WTC11 (cell line): ENCODE measurements at regions of chr6 and their contacts with region 1.

Region 1: GRCh38 chr6:24991810-24992467 is 56.2 kb upstream of the RIPOR2 start:
- DNase-seq: peak; percentile 61
- ATAC-seq: peak; percentile 88
- H3K4me3 Mint-ChIP-seq: no peak overlapping the region
- H3K27ac Mint-ChIP-seq: no peak overlapping the region
- H3K4me1 Mint-ChIP-seq: peaks cover 14% of the 10 kb centered on the region
- H3K27me3 Mint-ChIP-seq: peaks cover 2% of the 10 kb centered on the region; the same call in 1 of the 2 replicates
- CTCF ChIP-seq: peak; percentile 83

Region 2: DNA sequence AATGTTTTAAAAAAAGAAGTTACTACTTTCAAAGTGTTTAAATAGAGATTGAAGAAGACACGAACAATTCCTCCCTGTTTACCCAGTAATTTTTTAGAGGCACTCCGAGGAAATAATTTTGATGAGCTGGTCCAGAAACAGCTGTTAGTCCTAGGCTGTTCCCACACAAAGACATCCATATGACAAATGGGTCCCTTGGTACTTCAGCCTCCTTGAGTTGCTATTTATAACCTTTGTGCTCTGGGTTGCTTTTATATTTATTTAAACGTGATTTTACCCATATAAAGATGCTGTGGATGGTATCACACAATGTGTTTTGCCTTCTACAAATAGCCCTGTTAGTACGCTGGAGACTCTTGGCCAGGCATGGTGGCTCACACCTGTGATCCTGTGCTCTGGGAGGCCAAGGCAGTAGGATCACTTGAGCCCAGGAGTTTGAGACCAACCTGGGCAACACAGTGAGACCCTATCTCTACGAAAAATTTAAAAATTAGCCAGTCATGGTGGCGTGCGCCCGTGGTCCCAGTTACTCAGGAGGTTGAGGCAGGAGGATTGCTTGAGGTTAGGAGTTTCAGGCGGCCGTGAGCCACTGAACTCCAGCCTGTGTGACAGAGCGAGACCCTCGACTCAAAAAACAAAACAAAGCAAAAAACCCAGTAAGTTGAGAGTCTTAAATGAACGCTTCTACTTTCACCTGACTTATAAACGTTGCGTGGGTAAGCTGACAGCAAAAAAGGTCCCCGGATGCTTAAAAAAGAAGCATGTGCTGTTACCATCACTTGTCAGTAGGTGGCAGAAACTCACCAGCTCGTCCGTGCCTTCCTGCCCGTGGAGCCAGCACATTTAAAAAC is 136.3 kb before region 1 on chr6:
- CTCF ChIA-PET with region 1: interaction called, 53 read pairs
- POLR2A ChIA-PET with region 1: no interaction called
- DNase-seq: peak; percentile 44
- ATAC-seq: peak; percentile 89
- H3K4me3 Mint-ChIP-seq: no peak overlapping the region
- H3K27ac Mint-ChIP-seq: no peak overlapping the region
- H3K4me1 Mint-ChIP-seq: peaks cover 35% of the 10 kb centered on the region
- H3K27me3 Mint-ChIP-seq: no peaks in the 10 kb centered on the region
- CTCF ChIP-seq: peak; percentile 66; the same call in 1 of the 2 replicates

Region 3: GRCh38 chr6:24876499-24877465 is 115.2 kb before region 1 on chr6:
- CTCF ChIA-PET with region 1: interaction called, 23 read pairs
- POLR2A ChIA-PET with region 1: interaction called, 3 read pairs
- DNase-seq: peak; percentile 59
- ATAC-seq: peak; percentile 95
- H3K4me3 Mint-ChIP-seq: peak overlapping the region; percentile 44
- H3K27ac Mint-ChIP-seq: peak overlapping the region; percentile 74
- H3K4me1 Mint-ChIP-seq: peaks cover 72% of the 10 kb centered on the region
- H3K27me3 Mint-ChIP-seq: no peaks in the 10 kb centered on the region
- CTCF ChIP-seq: no peak

Region 4: GRCh38 chr6:24910961-24911712 is 80.8 kb before region 1 on chr6:
- CTCF ChIA-PET with region 1: interaction called, 51 read pairs
- POLR2A ChIA-PET with region 1: no interaction called
- DNase-seq: peak; percentile 69
- ATAC-seq: peak; percentile 50
- H3K4me3 Mint-ChIP-seq: peak overlapping the region; percentile 78
- H3K27ac Mint-ChIP-seq: no peak overlapping the region
- H3K4me1 Mint-ChIP-seq: peaks cover 34% of the 10 kb centered on the region
- H3K27me3 Mint-ChIP-seq: peaks cover 51% of the 10 kb centered on the region
- CTCF ChIP-seq: no peak

Region 5: DNA sequence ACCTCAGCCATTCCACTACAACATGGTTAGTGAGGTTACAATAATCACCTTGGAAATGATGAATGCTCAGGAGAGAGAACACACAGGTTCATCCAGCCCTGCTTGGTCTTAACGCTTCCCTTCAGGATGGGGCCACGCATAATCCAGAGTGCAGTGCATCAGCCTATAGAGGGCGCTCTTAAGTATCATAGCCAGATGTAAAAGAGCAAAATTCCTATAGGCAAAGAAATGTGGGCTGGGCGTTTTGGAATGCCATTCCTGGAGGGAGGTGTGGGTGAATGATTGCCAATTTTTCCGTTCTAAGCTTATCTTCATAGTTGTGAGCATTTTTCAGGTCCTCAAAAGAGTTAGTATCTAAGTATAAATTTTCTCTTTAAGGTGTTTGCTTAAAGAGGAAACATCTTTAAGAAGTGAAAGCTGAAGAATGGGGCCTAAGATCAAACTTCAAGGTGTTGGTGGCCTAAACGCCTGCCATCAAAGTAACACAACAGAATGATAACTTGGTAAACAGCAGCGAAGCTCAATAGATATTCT is 58.0 kb before region 1 on chr6:
- CTCF ChIA-PET with region 1: interaction called, 98 read pairs
- POLR2A ChIA-PET with region 1: interaction called, 4 read pairs
- DNase-seq: peak; percentile 61
- ATAC-seq: peak; percentile 81
- H3K4me3 Mint-ChIP-seq: peak overlapping the region; percentile 32
- H3K27ac Mint-ChIP-seq: 0 out of 2 replicates have a peak overlapping the region, but pooled peaks have one; percentile 33
- H3K4me1 Mint-ChIP-seq: peaks cover 66% of the 10 kb centered on the region
- H3K27me3 Mint-ChIP-seq: no peaks in the 10 kb centered on the region
- CTCF ChIP-seq: peak; percentile 79